ENCODE measurements at regions of chr3 and their contacts with region 1.

Region 1: DNA sequence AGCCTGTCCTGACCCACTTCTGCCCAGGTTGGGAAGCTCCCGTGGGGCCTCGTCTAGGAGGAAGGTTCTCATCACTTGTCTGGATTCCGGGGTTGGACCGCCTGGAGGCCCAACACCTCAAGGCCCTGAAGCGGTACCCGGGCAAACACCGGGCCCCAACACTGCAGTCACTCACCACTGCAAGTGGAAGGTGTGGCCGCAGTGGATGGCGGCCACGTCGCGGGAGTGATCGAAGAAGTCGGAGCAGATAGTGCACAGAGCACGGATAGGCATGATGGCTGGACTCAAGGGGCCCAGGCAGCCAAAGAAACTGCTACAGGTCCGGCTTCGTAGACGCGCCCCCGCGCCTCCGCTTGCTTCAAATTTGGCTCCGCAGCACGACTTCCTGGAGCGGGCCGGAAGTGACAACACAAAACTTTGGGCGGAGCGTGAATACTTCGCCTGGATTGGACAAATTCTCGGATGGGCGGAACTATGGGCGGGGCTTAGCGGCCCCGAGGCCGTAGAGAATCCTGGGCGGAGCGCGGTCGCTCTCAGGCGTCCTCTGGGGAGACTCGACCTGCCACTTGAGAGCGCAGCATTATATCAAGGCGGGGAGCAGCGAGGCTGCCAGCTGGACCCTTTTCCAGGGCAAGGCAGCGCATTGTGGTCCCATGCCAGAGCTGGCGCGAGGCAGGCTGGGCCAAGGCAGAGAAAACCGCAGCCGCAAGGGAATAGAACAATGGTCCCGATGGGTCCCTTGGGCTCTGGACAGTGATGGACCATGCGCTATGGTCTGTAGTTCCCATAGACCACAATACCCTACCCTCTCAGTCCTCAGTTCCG is at the start of gene TRAIP:
- DNase-seq: peak; percentile 76
- H3K4me3 ChIP-seq: peak within 1 kb of the TSS; percentile 71 to 94 (median 93)
- H3K27ac ChIP-seq: peak within 1 kb of the TSS; percentile 61
- H3K4me1 ChIP-seq: peaks cover 14% of the 10 kb centered on the region
- H3K27me3 ChIP-seq: peaks cover under 1% of the 10 kb centered on the region
- CTCF ChIP-seq: peak in 1 of 3 experiments; percentile 13
- polyA plus RNA-seq, gene TRAIP: 3.7 to 5.8 TPM (median 5.8 TPM) in 3 replicates

Region 2: GRCh38 chr3:48656061-48656840 is 1200.1 kb before region 1 on chr3:
- dilution Hi-C with region 1: no loop called
- DNase-seq: peak; percentile 58
- H3K4me3 ChIP-seq: peak overlapping the region; percentile 32 to 60 (median 41)
- H3K27ac ChIP-seq: no peak overlapping the region
- H3K4me1 ChIP-seq: peaks cover 4% of the 10 kb centered on the region
- H3K27me3 ChIP-seq: peaks cover 13% of the 10 kb centered on the region
- CTCF ChIP-seq: peak in 2 of 3 experiments; percentile 49 to 76

Region 3: DNA sequence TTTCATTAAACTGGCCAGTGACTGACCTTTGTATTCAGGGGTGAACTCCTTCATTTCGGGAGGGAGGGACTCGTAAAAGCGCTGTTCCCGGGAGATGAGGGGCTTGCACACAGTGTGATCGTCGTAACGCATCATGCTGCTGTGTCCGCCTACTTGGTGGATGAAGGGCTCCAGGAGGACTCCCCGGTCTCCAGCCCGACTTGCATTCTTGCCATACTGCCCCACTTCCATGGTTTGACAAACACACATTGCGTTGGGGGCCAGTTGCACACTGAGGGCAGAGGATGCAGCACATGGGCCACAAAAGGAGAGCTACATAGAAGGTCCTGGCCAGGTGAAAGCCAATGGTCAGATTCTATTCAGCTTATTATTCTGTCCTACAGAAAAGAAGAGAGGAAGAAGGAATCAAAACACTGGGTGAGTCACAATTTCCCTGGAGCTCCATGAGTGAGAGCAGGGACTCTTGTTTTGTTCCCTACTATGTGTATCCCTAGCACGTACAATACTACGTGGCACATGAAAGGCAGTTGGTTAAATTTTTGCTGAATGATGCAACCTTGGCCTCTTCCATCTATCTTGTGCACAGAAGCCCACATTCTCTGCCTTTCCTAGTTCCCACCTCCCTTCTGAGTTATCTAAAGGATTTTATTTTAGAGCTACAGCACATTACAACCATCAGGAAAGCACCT is 108.5 kb before region 1 on chr3:
- dilution Hi-C with region 1: loop called (anchors 25 kb)
- DNase-seq: no peak
- H3K4me3 ChIP-seq: no peak overlapping the region
- H3K27ac ChIP-seq: no peak overlapping the region
- H3K4me1 ChIP-seq: peaks cover 12% of the 10 kb centered on the region
- H3K27me3 ChIP-seq: no peaks in the 10 kb centered on the region
- CTCF ChIP-seq: no peak

Region 4: GRCh38 chr3:49966230-49966942 is 110.0 kb after region 1 on chr3:
- dilution Hi-C with region 1: loop called (anchors 25 kb)
- DNase-seq: peak; percentile 15
- H3K4me3 ChIP-seq: no peak overlapping the region
- H3K27ac ChIP-seq: no peak overlapping the region
- H3K4me1 ChIP-seq: peaks cover 11% of the 10 kb centered on the region
- H3K27me3 ChIP-seq: no peaks in the 10 kb centered on the region
- CTCF ChIP-seq: no peak

Measured in keratinocyte (primary cell).